ENCODE measurements at regions of chr6 and their contacts with region 1.

Region 1: DNA sequence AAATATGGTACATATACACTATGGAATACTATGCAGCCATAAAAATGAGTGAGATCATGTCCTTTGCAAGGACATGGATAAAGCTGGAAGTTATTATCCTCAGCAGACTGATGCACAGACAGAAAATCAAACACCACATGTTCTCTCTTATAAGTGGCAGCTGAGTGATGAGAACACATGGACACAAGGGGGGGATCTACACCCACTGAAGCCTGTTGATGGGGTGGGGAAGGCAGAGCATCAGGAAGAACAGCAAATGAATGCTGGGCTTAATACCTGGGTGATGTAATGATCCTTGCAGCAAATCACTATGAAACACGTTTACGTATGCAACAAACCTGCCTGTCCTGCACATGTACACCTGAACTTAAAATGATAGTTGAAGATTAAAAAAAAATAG is 71.3 kb downstream of the MANEA start:
- DNase-seq: peak; percentile 46
- ATAC-seq: peak; percentile 90
- H3K4me3 ChIP-seq: no peak overlapping the region
- H3K27ac ChIP-seq: no peak overlapping the region
- H3K4me1 ChIP-seq: no peaks in the 10 kb centered on the region
- H3K27me3 ChIP-seq: no peaks in the 10 kb centered on the region
- CTCF ChIP-seq: peak; percentile 74
- EP300 ChIP-seq: no peak
- POLR2A ChIP-seq: no peak
- RAD21 ChIP-seq: peak; percentile 41; the same call in 1 of the 2 replicates

Region 2: DNA sequence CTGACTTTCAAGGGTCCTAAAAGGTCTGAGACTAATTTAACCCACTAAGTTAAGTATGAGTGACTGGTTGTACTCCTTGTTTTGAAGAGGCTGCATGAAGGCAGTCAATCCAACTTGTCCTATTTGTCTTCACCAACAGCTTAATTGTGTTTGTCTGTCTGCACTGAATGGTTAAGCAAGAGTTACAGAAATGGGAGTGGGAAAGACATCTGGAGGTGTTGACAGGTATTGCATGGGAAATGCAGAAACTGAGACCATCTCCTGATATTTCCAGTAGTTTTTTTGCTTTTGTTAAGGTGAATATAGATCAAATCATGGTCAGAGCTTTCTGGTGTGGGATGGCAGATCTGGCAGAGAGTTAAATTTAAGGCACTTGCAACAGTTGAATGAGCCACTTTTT is 373.6 kb after region 1 on chr6:
- CTCF ChIA-PET with region 1: no interaction called
- POLR2A ChIA-PET with region 1: no interaction called
- in situ Hi-C with region 1: no loop called
- intact Hi-C with region 1: loop called (anchors 1 kb)
- DNase-seq: no peak
- ATAC-seq: peak; percentile 66
- H3K4me3 ChIP-seq: no peak overlapping the region
- H3K27ac ChIP-seq: no peak overlapping the region
- H3K4me1 ChIP-seq: no peaks in the 10 kb centered on the region
- H3K27me3 ChIP-seq: no peaks in the 10 kb centered on the region; a peak in 1 of 5 replicates
- CTCF ChIP-seq: peak; percentile 27; the same call in 1 of the 2 replicates
- EP300 ChIP-seq: no peak
- POLR2A ChIP-seq: no peak
- RAD21 ChIP-seq: no peak

Measured in HepG2 (cell line).